Activated CD8-positive, alpha-beta T cell treated with anti-CD3 and anti-CD28 coated beads for 36 hours (primary cell): ENCODE measurements at regions of chr19 and their contacts with region 1.

Region 1: DNA sequence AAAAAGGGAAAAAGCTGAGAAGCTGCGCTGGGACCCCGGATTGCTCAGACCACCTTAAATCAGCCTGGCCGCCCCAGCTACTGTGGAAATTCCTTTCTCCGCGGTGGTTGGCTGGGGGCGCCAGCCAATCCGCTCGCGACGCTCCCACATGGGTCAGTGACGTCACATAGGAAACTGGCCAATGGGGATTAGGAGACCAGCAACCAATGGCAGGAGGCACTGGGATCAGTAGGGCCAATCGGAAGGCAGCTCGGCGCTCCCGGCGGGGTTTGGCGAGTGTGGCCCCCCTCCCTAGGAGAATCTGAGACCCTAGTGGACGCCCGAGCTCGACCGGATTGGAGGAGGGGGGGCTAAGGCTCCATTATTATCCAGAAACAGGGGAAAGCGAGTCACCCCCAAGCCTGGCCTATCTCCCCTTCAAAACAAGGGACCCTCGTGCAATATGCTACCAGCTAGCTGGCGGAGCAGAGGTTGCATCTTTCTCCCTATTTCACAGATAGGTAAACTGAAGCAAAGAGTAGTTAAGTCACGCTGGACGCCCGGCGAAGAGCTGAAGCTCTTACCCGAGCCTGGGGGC is 6.5 kb upstream of the TLE2 start:
- DNase-seq: peak; percentile 98
- ATAC-seq: peak; percentile 95
- H3K4me3 Mint-ChIP-seq: peak overlapping the region; percentile 85
- H3K27ac Mint-ChIP-seq: peak overlapping the region; percentile 94
- H3K4me1 Mint-ChIP-seq: peaks cover 21% of the 10 kb centered on the region
- H3K27me3 Mint-ChIP-seq: peaks cover 1% of the 10 kb centered on the region
- CTCF ChIP-seq: no peak

Region 2: DNA sequence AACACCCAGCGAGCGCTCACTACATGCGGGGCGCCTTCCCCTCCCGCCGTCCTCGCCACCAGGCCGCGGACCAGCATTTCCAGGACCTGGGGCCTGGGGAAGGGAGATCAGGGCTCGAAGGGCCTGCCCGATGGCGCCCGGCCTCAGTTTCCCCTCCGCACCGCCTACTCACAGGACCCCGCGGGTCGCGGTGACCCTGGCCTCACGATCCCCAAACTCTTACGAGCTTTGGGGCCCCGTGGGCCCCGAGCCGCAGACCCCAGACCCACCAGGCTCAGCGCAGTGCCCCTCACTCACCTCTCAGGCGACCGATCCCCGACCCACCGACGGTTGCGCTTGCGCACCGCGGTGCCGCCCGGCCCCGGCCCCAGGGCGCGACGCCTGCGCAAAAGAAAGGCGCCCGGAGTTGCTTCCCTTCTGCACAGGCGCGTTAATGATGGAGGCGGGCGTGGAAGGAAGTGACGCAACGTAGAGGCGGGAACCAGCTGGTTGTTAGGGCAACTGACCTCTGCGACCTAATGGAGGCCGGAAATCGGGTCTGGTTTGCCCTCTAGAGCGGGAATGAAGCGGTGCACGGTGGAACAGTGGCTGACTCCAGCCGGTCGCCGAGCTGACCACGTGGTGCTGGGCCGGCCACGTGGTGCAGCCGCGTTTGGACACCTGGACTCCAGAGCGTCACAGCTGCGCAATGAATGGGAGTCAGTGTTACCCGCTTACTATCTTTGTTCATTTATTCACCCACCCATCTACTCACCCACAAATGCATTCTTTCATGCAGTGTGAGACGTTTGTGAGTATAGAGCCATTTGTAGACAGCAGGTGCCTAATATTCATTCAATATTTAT is 252.5 kb before region 1 on chr19 and contains the start of gene SGTA:
- CTCF ChIA-PET with region 1: no interaction called
- POLR2A ChIA-PET with region 1: no interaction called
- intact Hi-C with region 1: loop called (anchors 10 kb)
- DNase-seq: peak; percentile 99
- ATAC-seq: peak; percentile 79
- H3K4me3 Mint-ChIP-seq: peak within 1 kb of the TSS; percentile 93
- H3K27ac Mint-ChIP-seq: peak within 1 kb of the TSS; percentile 98
- H3K4me1 Mint-ChIP-seq: peaks cover 47% of the 10 kb centered on the region
- H3K27me3 Mint-ChIP-seq: no peaks in the 10 kb centered on the region
- CTCF ChIP-seq: no peak
- total RNA-seq, gene SGTA: 53.4 to 60.8 TPM

Region 3: DNA sequence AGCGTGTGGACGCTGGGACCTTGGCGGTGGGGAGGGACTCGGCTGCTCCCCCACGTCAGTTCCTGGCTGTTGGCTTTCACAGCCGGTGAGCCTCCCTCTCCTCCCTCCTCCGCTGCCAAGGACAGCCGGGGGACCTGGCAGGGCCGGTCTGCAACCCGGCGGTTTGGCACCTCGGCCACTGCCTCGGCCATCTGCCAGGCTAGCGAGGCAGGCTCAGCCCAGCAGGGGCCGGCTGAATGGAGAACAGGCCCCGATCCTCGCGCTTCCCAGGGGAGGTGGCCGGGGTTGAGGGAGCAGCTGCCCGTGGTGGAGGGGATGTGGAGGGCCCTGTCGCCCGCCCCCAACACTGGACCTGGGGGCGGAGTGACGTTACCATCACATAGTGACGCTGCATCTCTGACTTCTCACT is 21.7 kb after region 1 on chr19:
- CTCF ChIA-PET with region 1: interaction called, 10 read pairs
- POLR2A ChIA-PET with region 1: interaction called, 17 read pairs
- intact Hi-C with region 1: no loop called
- DNase-seq: no peak
- ATAC-seq: no peak
- H3K4me3 Mint-ChIP-seq: no peak overlapping the region
- H3K27ac Mint-ChIP-seq: no peak overlapping the region
- H3K4me1 Mint-ChIP-seq: peaks cover 50% of the 10 kb centered on the region
- H3K27me3 Mint-ChIP-seq: no peaks in the 10 kb centered on the region
- CTCF ChIP-seq: no peak

Region 4: DNA sequence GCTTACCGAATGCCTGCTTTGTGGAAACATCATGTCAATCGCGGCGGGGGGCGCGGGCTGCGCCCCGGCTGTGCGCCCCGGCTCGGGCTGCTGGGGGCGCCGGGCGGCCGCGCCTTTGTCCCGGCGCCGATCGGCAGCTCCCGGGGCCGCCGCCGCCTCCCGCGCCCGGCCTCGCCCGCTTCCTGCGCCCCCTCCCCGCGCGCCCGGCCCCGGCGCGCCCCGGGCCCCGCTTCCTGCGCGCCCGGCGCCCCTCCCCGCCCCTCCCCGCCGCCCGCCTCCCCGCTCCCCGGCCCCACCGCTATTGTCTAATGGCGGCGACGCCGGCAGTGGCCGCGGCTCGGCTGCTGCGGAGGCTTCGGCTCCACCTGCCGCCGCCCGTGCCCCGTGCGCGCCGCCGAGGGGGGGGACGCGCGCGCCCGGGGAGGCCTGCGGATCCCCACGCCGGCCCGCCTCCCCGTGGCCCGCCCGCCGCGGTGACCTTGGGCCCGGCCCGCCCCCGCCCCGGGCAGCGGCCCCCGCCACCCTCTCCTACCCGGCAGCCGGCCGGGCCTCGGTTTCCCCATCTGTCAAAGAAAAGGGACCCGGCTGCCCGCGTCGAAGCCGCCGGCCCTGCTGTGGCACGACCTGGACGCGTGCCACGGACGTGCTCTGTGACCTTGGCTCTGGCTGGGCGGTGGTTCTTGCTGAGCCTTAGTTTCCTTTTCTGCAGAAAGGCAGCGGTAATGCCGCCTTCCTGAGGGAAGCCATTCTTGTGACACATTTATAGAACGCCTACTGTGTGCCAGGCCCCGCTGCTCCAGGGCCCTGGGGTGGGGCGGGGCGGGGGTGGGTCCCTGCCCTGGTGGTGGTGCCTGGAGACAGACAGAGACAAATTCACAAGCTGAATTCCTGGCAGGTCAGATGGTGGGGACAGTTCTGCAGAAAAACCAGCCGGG is 26.8 kb after region 1 on chr19 and contains the start of gene TLE5:
- CTCF ChIA-PET with region 1: interaction called, 10 read pairs
- POLR2A ChIA-PET with region 1: interaction called, 14 read pairs
- intact Hi-C with region 1: no loop called
- DNase-seq: peak; percentile 65
- ATAC-seq: peak; percentile 55
- H3K4me3 Mint-ChIP-seq: peak within 1 kb of the TSS; percentile 80
- H3K27ac Mint-ChIP-seq: peak within 1 kb of the TSS; percentile 94
- H3K4me1 Mint-ChIP-seq: peaks cover 29% of the 10 kb centered on the region
- H3K27me3 Mint-ChIP-seq: no peaks in the 10 kb centered on the region
- CTCF ChIP-seq: no peak
- total RNA-seq, gene TLE5: 283 to 296 TPM

Region 5: GRCh38 chr19:3167533-3168272 is 132.1 kb after region 1 on chr19:
- CTCF ChIA-PET with region 1: no interaction called
- POLR2A ChIA-PET with region 1: no interaction called
- intact Hi-C with region 1: no loop called
- DNase-seq: no peak
- ATAC-seq: no peak
- H3K4me3 Mint-ChIP-seq: no peak overlapping the region
- H3K27ac Mint-ChIP-seq: no peak overlapping the region
- H3K4me1 Mint-ChIP-seq: peaks cover 12% of the 10 kb centered on the region
- H3K27me3 Mint-ChIP-seq: no peaks in the 10 kb centered on the region
- CTCF ChIP-seq: no peak